ENCODE measurements at regions of chr1 and their contacts with region 1.

Region 1: DNA sequence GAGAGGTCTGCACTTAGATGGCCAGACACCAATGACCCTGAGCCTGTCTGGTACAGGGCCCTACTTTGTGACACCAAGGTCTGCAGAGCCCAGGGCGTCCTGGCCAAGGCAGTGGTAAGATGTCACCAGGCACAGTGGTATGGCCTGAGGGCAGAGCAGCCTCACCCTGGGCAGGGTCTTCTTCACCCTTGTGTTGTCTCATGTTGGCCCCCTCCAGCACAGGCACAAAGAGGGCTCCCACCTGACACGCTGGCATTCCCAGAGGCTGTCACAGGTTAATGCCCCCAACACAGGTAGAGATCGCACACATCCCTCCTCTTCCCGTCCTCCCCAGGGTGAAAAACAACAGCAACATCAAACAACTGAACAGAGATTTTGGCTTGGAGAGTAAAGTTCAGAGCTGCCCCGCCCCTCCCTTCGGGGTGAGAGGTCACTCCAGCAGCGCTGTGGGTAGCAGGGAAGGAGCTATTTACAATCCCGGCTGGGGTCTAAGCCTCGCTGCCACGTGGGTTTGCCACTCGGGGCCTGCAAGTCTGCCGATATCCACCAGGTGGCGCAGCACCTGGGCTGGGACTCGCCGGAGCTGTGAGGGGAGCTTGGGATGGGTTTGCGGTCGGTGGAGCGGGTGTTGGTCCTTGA is 12.6 kb downstream of the EFNA3 start:
- DNase-seq: peak; percentile 61 to 87 (median 79)
- ATAC-seq: peak; percentile 84 to 89
- H3K4me3 Mint-ChIP-seq: peak overlapping the region in 1 of 10 donors; percentile 22
- H3K27ac Mint-ChIP-seq: peak overlapping the region in 3 of 10 donors; percentile 29 to 57 (median 43)
- H3K4me1 Mint-ChIP-seq: peaks cover 5 to 8% (median 6%) of the 10 kb centered on the region in 4 donors
- H3K27me3 Mint-ChIP-seq: peaks cover 0 to 6% (median 0%) of the 10 kb centered on the region in 5 donors

Region 2: DNA sequence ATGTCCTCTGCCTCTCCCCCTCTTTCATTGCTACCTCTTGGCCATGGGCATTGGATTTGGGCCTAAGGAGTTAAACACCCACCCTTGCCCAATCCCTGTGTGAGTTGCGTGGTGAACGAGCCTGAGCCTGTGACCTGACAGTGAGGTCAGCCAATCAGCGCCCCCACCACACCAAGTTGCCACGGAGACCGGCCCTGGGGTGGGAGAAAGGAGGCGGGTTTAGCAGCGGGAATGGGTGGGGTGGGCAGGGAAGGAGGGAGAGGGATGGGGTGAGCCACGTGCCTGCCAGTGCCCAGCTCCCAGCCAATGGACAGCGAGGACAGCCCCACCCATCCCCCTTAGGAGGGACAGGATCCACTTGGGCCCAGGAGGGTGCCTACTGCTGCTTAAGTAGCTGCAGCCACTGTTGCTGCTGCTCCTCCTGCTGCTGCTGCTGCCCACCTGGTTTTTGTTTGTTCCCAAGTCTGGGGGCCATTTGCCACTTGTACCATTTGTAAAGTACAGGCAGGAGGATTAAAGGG is 79.1 kb before region 1 on chr1:
- POLR2A ChIA-PET with region 1: no interaction called
- DNase-seq: no peak
- ATAC-seq: no peak
- H3K4me3 Mint-ChIP-seq: peak overlapping the region in 3 of 10 donors; percentile 15 to 34 (median 16)
- H3K27ac Mint-ChIP-seq: peak overlapping the region in 3 of 10 donors; percentile 48 to 83 (median 75)
- H3K4me1 Mint-ChIP-seq: peaks cover 33 to 81% (median 79%) of the 10 kb centered on the region in 4 donors
- H3K27me3 Mint-ChIP-seq: no peaks in the 10 kb centered on the region

Region 3: GRCh38 chr1:155167166-155168104 is 76.2 kb after region 1 on chr1:
- POLR2A ChIA-PET with region 1: interaction called, 16 read pairs
- DNase-seq: peak; percentile 70 to 91 (median 83)
- ATAC-seq: peak; percentile 78 to 85
- H3K4me3 Mint-ChIP-seq: peak overlapping the region; percentile 37 to 76 (median 68)
- H3K27ac Mint-ChIP-seq: peak overlapping the region in 7 of 10 donors; percentile 35 to 71 (median 51)
- H3K4me1 Mint-ChIP-seq: peaks cover 13 to 32% (median 22%) of the 10 kb centered on the region in 4 donors
- H3K27me3 Mint-ChIP-seq: no peaks in the 10 kb centered on the region